ENCODE measurements at regions of chr7 and their contacts with region 1.

Region 1: GRCh38 chr7:137606061-137606674 is 240.6 kb downstream of the DGKI start:
- DNase-seq: peak; percentile 71
- ATAC-seq: peak; percentile 57; the same call in 1 of the 2 replicates
- H3K4me3 ChIP-seq: no peak overlapping the region
- H3K27ac ChIP-seq: no peak overlapping the region
- H3K4me1 ChIP-seq: no peaks in the 10 kb centered on the region
- H3K27me3 ChIP-seq: no peaks in the 10 kb centered on the region
- CTCF ChIP-seq: peak; percentile 56
- POLR2A ChIP-seq: no peak
- RAD21 ChIP-seq: peak; percentile 55

Region 2: GRCh38 chr7:136687693-136688322 is 918.4 kb before region 1 on chr7:
- CTCF ChIA-PET with region 1: no interaction called
- POLR2A ChIA-PET with region 1: no interaction called
- dilution Hi-C with region 1: no loop called
- in situ Hi-C with region 1: loop called (anchors 25 kb)
- intact Hi-C with region 1: no loop called
- DNase-seq: peak; percentile 39
- ATAC-seq: peak; percentile 67
- H3K4me3 ChIP-seq: no peak overlapping the region
- H3K27ac ChIP-seq: no peak overlapping the region
- H3K4me1 ChIP-seq: no peaks in the 10 kb centered on the region
- H3K27me3 ChIP-seq: peaks cover 3% of the 10 kb centered on the region
- CTCF ChIP-seq: peak; percentile 58
- POLR2A ChIP-seq: no peak
- RAD21 ChIP-seq: peak; percentile 51

Region 3: GRCh38 chr7:137656227-137656849 is 50.2 kb after region 1 on chr7:
- CTCF ChIA-PET with region 1: interaction called, 3 read pairs
- POLR2A ChIA-PET with region 1: no interaction called
- dilution Hi-C with region 1: no loop called
- in situ Hi-C with region 1: no loop called
- intact Hi-C with region 1: loop called (anchors 2 kb)
- DNase-seq: peak; percentile 79
- ATAC-seq: peak; percentile 89
- H3K4me3 ChIP-seq: no peak overlapping the region
- H3K27ac ChIP-seq: no peak overlapping the region
- H3K4me1 ChIP-seq: peaks cover 3% of the 10 kb centered on the region
- H3K27me3 ChIP-seq: no peaks in the 10 kb centered on the region
- CTCF ChIP-seq: peak; percentile 89
- POLR2A ChIP-seq: 0 out of 2 replicates have a peak, but pooled peaks have one; percentile 43
- RAD21 ChIP-seq: peak; percentile 94

Region 4: GRCh38 chr7:137898839-137899721 is 292.9 kb after region 1 on chr7:
- CTCF ChIA-PET with region 1: interaction called, 3 read pairs
- POLR2A ChIA-PET with region 1: no interaction called
- dilution Hi-C with region 1: no loop called
- in situ Hi-C with region 1: loop called (anchors 5 kb)
- intact Hi-C with region 1: loop called (anchors 1 kb)
- DNase-seq: peak; percentile 66
- ATAC-seq: peak; percentile 94
- H3K4me3 ChIP-seq: no peak overlapping the region
- H3K27ac ChIP-seq: no peak overlapping the region
- H3K4me1 ChIP-seq: no peaks in the 10 kb centered on the region
- H3K27me3 ChIP-seq: no peaks in the 10 kb centered on the region
- CTCF ChIP-seq: peak; percentile 90
- POLR2A ChIP-seq: no peak
- RAD21 ChIP-seq: peak; percentile 97

Region 5: GRCh38 chr7:138008547-138009349 is 402.6 kb after region 1 on chr7:
- CTCF ChIA-PET with region 1: no interaction called
- POLR2A ChIA-PET with region 1: no interaction called
- dilution Hi-C with region 1: loop called (anchors 25 kb)
- in situ Hi-C with region 1: loop called (anchors 5 kb)
- intact Hi-C with region 1: loop called (anchors 2 kb)
- DNase-seq: peak; percentile 68
- ATAC-seq: peak; percentile 87
- H3K4me3 ChIP-seq: no peak overlapping the region
- H3K27ac ChIP-seq: no peak overlapping the region; the same call in 1 of the 2 replicates
- H3K4me1 ChIP-seq: peaks cover 5% of the 10 kb centered on the region; the same call in 1 of the 2 replicates
- H3K27me3 ChIP-seq: peaks cover 5% of the 10 kb centered on the region; the same call in 1 of the 2 replicates
- CTCF ChIP-seq: peak; percentile 94
- POLR2A ChIP-seq: no peak
- RAD21 ChIP-seq: peak; percentile 90

Measured in IMR-90 (cell line).